Brain microvascular endothelial cell (primary cell): ENCODE measurements at regions of chr11 and their contacts with region 1.

Region 1: GRCh38 chr11:122628810-122629555 is 26.5 kb upstream of the UBASH3B start:
- DNase-seq: peak; percentile 77
- H3K4me3 ChIP-seq: no peak overlapping the region
- H3K27ac ChIP-seq: no peak overlapping the region
- H3K27me3 ChIP-seq: no peaks in the 10 kb centered on the region
- CTCF ChIP-seq: peak; percentile 99

Region 2: DNA sequence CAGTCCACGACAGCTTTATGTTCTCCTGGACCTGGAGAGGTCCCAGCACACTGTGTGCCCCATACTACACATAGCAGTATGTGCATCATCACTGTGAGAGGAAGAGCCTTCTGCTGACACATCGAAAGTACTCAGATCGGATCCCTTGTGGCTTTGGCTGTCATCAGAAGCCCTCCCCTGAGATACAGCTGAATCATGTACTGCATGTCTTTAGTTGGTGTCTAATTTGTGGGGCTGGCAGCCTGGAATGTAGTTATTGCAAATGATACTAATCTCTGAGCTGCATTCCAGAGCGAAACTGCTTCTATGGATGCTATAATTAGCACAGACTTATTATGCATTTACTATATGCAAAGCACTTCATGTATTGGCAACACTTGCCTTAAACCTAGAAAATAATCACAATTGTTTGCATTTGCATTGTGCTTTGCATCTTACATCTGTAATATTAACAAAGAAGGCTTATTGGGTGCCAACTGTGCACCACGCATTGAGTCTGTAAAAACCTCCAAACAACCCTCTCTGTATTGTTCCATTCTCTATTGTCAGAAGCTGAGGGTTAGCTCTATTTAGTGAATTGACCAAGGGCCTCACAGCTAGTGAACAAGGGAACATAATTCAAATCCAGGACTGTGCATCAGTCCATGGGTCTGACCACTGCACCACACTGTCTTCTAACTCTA is 120.2 kb after region 1 on chr11:
- in situ Hi-C with region 1: loop called (anchors 25 kb)
- DNase-seq: peak; percentile 96
- H3K4me3 ChIP-seq: no peak overlapping the region
- H3K27ac ChIP-seq: peak overlapping the region; percentile 48
- H3K27me3 ChIP-seq: no peaks in the 10 kb centered on the region
- CTCF ChIP-seq: no peak

Region 3: GRCh38 chr11:122796128-122796717 is 167.2 kb after region 1 on chr11:
- in situ Hi-C with region 1: no loop called
- DNase-seq: peak; percentile 55
- H3K4me3 ChIP-seq: no peak overlapping the region
- H3K27ac ChIP-seq: no peak overlapping the region
- H3K27me3 ChIP-seq: no peaks in the 10 kb centered on the region
- CTCF ChIP-seq: peak; percentile 94

Region 4: GRCh38 chr11:122853971-122854446 is 225.0 kb after region 1 on chr11:
- in situ Hi-C with region 1: loop called (anchors 10 kb)
- DNase-seq: peak; percentile 80
- H3K4me3 ChIP-seq: no peak overlapping the region
- H3K27ac ChIP-seq: no peak overlapping the region
- H3K27me3 ChIP-seq: no peaks in the 10 kb centered on the region
- CTCF ChIP-seq: peak; percentile 54

Region 5: DNA sequence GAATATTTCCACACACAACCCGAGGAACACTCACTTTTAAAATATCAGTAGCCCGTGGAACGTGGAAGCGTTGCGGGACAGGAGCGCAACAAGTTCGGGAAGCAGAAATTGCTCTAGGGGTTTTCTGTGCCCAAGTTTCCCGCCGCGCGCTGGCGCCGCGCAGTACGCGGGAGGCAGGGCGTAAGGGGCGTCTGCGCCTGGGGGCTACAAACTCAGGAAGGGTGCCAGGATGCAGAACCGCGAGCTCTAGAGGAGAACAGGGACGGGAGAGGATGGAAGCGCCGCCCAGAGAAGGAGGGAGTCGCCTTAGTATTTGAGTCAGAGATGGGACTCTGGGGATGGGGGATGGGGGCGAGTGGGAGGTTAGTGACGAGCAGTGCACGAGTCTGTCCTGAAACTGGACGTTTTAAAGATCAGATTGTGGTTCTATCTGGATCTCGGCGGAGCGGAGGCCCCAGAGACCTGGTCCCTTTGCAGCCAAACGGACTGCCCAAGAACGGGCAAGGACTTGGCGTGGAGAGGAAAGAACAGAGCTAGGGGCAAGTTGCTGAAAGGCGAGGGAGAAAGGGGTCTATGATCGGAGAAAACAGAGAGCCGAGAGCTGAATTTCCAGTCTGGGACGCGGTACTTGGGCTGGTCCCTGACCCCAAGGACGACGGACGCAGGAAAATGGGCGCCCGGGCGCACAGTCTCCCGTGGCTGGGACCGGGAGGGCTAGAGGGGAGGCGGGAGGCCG is 347.9 kb after region 1 on chr11:
- in situ Hi-C with region 1: no loop called
- DNase-seq: no peak
- H3K4me3 ChIP-seq: no peak overlapping the region
- H3K27ac ChIP-seq: no peak overlapping the region
- H3K27me3 ChIP-seq: peaks cover 77% of the 10 kb centered on the region
- CTCF ChIP-seq: no peak